Activated T-helper 1 cell treated with anti-CD3 and anti-CD28 coated beads, Interleukin-12 subunit alpha, Interleukin-12 subunit beta, Interleukin-2, Interleukin-4 antibody, amounts not matched to agents 30 ng/mL and 10 ng/mL and 1 ng/mL, durations not matched to agents 14 hours and 24 hours and 36 hours (primary cell): ENCODE measurements at regions of chr15 and their contacts with region 1.

Region 1: DNA sequence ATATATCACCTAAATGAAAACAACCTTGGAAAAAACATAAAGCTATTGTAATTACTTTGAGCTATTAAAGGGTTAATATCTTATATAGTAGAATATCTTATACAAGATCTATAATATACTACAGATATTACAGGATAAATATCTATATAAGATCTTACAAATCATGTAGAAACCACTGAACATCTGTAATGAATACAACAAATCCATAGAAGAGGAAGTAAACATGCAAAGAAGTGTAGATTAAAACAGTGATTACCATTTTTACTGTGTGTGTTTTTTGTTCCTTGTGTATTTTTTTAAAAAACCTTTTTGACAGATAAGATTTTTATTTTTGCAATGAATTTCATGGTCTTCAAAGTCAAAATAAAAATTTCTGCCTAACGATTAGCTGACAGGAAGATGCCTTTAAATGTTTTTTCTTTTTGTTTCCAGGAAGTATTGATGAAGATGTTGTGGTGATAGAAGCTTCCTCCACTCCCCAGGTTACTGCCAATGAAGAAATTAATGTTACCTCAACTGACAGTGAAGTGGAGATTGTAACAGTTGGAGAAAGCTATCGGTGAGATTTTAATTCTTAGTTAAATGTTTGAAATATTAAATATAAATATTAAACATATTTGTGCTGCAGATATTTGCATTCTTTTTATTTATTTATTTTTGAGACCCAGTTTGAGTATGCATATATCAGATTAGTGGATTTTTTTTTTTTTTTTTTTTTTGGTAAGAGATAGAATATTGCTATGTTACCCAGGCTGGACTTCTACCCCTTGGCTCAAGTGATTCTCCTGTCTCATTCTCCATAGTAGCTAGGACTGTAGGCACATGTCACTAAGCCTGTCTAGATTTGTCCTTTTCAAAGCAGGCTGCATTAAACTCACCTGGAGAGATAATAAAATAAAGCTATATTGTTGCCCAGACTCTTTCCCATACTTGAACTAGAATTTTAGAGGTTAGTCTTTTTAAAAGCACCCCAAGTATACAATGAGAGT is 52.8 kb upstream of the CCNB2 start:
- DNase-seq: no peak
- H3K4me3 Mint-ChIP-seq: peak overlapping the region; percentile 34
- H3K27ac Mint-ChIP-seq: peak overlapping the region; percentile 76
- H3K4me1 Mint-ChIP-seq: peaks cover 37% of the 10 kb centered on the region
- H3K27me3 Mint-ChIP-seq: no peaks in the 10 kb centered on the region

Region 2: GRCh38 chr15:59039225-59039624 is 12.9 kb before region 1 on chr15:
- intact Hi-C with region 1: loop called (anchors 2 kb)
- DNase-seq: no peak
- H3K4me3 Mint-ChIP-seq: peak overlapping the region; percentile 23
- H3K27ac Mint-ChIP-seq: peak overlapping the region; percentile 66
- H3K4me1 Mint-ChIP-seq: peaks cover 31% of the 10 kb centered on the region
- H3K27me3 Mint-ChIP-seq: no peaks in the 10 kb centered on the region

Region 3: GRCh38 chr15:59096429-59096828 is 44.3 kb after region 1 on chr15:
- intact Hi-C with region 1: loop called (anchors 1 kb)
- DNase-seq: no peak
- H3K4me3 Mint-ChIP-seq: no peak overlapping the region
- H3K27ac Mint-ChIP-seq: no peak overlapping the region
- H3K4me1 Mint-ChIP-seq: peaks cover 18% of the 10 kb centered on the region
- H3K27me3 Mint-ChIP-seq: no peaks in the 10 kb centered on the region

Region 4: GRCh38 chr15:59501597-59501996 is 449.4 kb after region 1 on chr15:
- intact Hi-C with region 1: no loop called
- DNase-seq: no peak
- H3K4me3 Mint-ChIP-seq: no peak overlapping the region
- H3K27ac Mint-ChIP-seq: no peak overlapping the region
- H3K4me1 Mint-ChIP-seq: no peaks in the 10 kb centered on the region
- H3K27me3 Mint-ChIP-seq: peaks cover 16% of the 10 kb centered on the region